ENCODE measurements at regions of chr9 and their contacts with region 1.

Region 1: DNA sequence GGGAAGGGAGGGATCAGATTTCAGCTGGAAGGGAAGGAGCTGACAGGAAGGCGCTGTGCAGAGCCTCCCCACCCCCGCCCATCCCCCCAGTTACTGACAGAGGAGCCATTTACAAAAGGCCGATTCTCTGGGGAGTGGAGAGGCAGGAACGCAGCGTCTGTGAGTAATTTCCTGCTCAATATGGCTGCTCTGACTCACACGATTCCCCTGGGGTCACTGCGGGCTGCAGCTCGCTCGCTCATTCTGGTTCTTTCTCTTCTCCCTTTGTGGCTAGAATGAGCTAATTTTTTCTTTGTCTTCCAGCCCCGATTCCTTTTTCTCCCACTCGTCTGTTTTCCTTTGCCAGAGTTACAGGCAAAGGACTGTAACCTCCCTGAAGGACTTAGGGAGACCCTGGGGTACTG is 28.8 kb downstream of the PTPA start:
- DNase-seq: peak; percentile 92
- H3K4me3 Mint-ChIP-seq: peak overlapping the region; percentile 72
- H3K27ac Mint-ChIP-seq: peak overlapping the region; percentile 97
- H3K4me1 Mint-ChIP-seq: peaks cover 34% of the 10 kb centered on the region
- H3K27me3 Mint-ChIP-seq: no peaks in the 10 kb centered on the region

Region 2: DNA sequence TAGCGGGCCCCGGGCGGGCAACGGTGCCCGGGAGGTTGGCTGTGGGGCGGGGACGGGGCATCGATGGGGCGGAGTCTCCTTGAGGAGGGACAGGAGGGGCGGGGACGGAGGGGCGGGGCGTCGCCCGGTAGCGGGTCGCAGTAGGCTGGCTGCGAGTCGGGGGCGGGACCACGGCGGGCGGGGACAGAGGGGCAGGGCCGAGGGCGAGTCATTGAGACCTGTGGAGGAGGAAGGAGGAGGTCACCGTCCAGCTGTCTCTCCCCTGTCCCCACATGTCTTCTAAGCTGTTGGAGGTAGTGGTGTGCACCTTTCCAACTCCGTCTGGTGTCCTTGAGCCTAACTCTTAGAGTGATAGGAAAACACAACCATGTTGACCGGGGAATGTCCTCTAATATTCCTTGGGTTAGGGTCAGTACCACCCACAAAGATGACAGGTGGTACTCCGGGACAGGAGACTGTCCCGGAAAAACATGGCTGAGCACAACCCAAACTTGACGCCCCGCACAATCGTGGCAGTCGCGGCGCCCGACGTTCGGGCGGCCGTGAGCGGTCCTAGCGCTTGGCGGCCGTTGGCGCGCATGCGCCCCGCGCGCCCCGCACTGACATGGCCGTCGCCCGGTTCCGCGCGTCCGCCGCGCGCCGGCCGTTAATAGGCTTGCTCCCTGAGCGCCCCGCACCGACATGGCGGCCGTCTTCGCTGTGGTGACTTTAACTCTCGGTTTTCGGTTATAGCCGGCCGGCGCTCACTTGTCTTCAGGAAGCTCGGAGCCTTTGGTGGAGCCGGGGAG is 29.1 kb before region 1 on chr9 and contains the starts of genes CRAT and PTPA:
- CTCF ChIA-PET with region 1: interaction called, 4 read pairs
- intact Hi-C with region 1: loop called (anchors 1 kb)
- DNase-seq: peak; percentile 99
- H3K4me3 Mint-ChIP-seq: peak within 1 kb of the TSS; percentile 87
- H3K27ac Mint-ChIP-seq: peak within 1 kb of the TSS; percentile 93
- H3K4me1 Mint-ChIP-seq: peaks cover 38% of the 10 kb centered on the region
- H3K27me3 Mint-ChIP-seq: no peaks in the 10 kb centered on the region
- total RNA-seq, gene CRAT: 15.0 to 15.8 TPM
- total RNA-seq, gene PTPA: 83.0 to 94.5 TPM

Region 3: DNA sequence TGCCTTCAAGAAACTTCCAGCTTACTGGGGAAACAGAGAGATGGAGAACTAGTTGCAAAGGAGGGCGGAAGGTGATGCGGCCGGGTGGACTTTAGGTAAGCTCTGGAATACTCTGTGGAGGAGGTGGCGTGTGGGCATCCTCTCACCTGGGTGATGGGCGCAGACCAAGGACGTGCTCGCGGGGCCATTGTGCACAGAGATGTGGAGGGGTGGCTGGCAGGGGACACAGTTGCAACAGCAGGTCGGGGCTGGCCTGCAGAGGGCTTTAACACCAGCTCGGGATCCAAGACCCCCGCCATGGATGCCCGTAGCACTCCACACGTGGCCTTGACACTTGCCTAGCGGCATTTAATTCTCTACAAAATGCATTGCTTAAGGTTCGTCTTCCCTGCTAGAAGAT is 11.5 kb after region 1 on chr9:
- CTCF ChIA-PET with region 1: interaction called, 10 read pairs
- intact Hi-C with region 1: no loop called
- DNase-seq: no peak
- H3K4me3 Mint-ChIP-seq: no peak overlapping the region
- H3K27ac Mint-ChIP-seq: no peak overlapping the region
- H3K4me1 Mint-ChIP-seq: no peaks in the 10 kb centered on the region
- H3K27me3 Mint-ChIP-seq: no peaks in the 10 kb centered on the region

Region 4: GRCh38 chr9:129177791-129178559 is 38.0 kb after region 1 on chr9 and contains the start of gene IER5L:
- CTCF ChIA-PET with region 1: interaction called, 31 read pairs
- intact Hi-C with region 1: loop called (anchors 1 kb)
- DNase-seq: peak; percentile 93
- H3K4me3 Mint-ChIP-seq: peak within 1 kb of the TSS; percentile 87
- H3K27ac Mint-ChIP-seq: no peak within 1 kb of the TSS
- H3K4me1 Mint-ChIP-seq: peaks cover 8% of the 10 kb centered on the region
- H3K27me3 Mint-ChIP-seq: no peaks in the 10 kb centered on the region
- total RNA-seq, gene IER5L: 1.1 to 1.6 TPM

Region 5: GRCh38 chr9:129383561-129384416 is 243.8 kb after region 1 on chr9:
- CTCF ChIA-PET with region 1: interaction called, 7 read pairs
- intact Hi-C with region 1: loop called (anchors 2 kb)
- DNase-seq: peak; percentile 80
- H3K4me3 Mint-ChIP-seq: peak overlapping the region; percentile 69
- H3K27ac Mint-ChIP-seq: peak overlapping the region; percentile 66
- H3K4me1 Mint-ChIP-seq: peaks cover 10% of the 10 kb centered on the region
- H3K27me3 Mint-ChIP-seq: no peaks in the 10 kb centered on the region

Region 6: DNA sequence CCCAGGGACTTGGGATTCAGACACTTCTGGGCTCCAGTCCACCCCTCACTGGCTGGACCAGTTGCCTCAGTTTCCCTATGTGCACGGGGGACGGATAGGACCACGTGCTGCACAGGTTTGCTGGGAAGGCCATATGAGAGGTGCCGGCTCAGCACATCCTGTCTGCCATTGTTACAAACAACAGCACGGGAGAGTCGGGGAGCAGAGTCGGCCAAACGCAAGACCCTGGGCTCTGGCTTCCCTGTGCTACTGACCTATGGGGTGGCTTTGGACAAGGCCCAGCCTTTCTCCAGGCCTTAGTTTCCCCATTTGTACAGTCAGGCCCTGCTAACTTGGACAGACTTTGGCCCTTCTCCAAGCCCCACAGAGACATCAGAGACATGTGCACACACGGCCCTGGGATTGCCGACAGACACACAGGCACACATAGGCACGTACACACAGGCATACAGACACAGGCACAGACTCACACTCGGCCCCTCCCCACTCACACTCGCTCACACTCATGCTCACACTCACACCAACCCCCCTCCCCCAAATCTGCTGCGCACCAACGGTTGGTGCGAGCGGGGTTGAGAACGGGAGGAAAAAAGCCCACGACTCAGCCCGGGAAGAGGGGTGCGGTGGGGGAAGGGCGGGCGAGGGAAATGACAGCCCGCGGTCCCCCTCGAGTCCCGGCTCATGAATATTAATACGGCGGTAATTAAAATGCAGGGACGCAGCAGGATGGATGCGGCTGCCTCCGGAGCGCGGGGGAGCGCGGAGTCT is 347.8 kb after region 1 on chr9:
- CTCF ChIA-PET with region 1: no interaction called
- intact Hi-C with region 1: loop called (anchors 5 kb)
- DNase-seq: peak; percentile 75
- H3K4me3 Mint-ChIP-seq: peak overlapping the region; percentile 93
- H3K27ac Mint-ChIP-seq: peak overlapping the region; percentile 100
- H3K4me1 Mint-ChIP-seq: peaks cover 62% of the 10 kb centered on the region
- H3K27me3 Mint-ChIP-seq: no peaks in the 10 kb centered on the region

Region 7: GRCh38 chr9:129610473-129611301 is 470.7 kb after region 1 on chr9:
- CTCF ChIA-PET with region 1: interaction called, 25 read pairs
- intact Hi-C with region 1: loop called (anchors 1 kb)
- DNase-seq: peak; percentile 83
- H3K4me3 Mint-ChIP-seq: peak overlapping the region; percentile 71
- H3K27ac Mint-ChIP-seq: no peak overlapping the region
- H3K4me1 Mint-ChIP-seq: peaks cover 25% of the 10 kb centered on the region
- H3K27me3 Mint-ChIP-seq: no peaks in the 10 kb centered on the region

Measured in activated naive CD4-positive, alpha-beta T cell treated with anti-CD3 and anti-CD28 coated beads for 36 hours (primary cell).